GM12878 (cell line): ENCODE measurements at regions of chr17 and their contacts with region 1.

Region 1: DNA sequence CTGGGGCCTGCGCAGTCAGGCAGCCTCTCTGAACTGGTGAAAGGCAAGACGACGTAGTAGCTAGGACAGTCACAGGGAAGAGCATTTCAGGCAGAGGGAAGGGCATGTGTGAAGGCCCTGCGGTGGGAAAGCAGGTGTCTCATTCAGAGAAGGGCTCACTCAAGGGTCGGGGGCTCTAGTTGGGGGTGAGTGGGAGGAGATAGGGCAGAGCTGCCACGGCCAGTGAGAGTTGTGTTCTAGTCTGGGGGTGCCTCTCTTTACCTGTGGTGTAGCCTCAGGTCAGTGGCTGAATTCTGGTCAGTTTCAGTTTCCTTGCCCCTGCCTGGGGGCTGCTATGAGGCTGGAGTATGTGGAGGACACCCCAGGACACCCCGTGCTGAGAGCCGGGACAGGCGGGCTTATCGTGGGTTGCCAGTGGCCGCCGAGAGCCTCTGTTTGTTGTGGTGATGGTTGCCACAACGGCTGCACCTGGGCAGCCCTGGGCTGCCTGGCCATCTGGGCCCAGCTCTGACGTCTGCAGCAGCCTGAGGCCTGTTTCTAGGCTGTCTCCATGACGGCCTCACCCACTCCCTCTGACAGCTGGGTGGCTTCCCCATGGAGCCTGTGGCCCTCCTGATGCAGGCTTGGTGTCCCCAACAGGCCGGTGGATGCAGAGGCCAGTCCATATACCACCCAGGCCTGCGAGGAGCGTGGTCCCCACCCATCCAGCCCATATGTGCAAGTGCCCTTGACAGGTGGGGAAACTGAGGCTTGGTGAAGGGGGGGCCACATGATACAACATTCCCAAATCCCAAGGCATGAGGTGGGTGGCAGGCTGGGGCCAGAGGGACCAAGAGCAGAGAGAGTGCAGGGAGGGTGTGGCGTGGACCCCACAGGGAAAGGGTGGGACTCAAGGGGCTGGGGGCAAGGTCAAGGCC is 10.8 kb downstream of the MAP2K3 start:
- DNase-seq: no peak
- ATAC-seq: peak; percentile 28
- H3K4me3 ChIP-seq: no peak overlapping the region
- H3K27ac ChIP-seq: no peak overlapping the region
- H3K4me1 ChIP-seq: no peaks in the 10 kb centered on the region
- H3K27me3 ChIP-seq: no peaks in the 10 kb centered on the region
- CTCF ChIP-seq: no peak
- EP300 ChIP-seq: no peak
- POLR2A ChIP-seq: no peak
- RAD21 ChIP-seq: no peak

Region 2: GRCh38 chr17:22171631-22172030 is 876.3 kb after region 1 on chr17:
- CTCF ChIA-PET with region 1: no interaction called
- POLR2A ChIA-PET with region 1: no interaction called
- RAD21 ChIA-PET with region 1: no interaction called
- SMC1A ChIA-PET with region 1: no interaction called
- in situ Hi-C with region 1: loop called (anchors 10 kb)
- intact Hi-C with region 1: no loop called
- DNase-seq: no peak
- ATAC-seq: no peak
- H3K4me3 ChIP-seq: no peak overlapping the region
- H3K27ac ChIP-seq: no peak overlapping the region
- H3K4me1 ChIP-seq: no peaks in the 10 kb centered on the region
- H3K27me3 ChIP-seq: no peaks in the 10 kb centered on the region
- CTCF ChIP-seq: no peak
- EP300 ChIP-seq: no peak
- POLR2A ChIP-seq: no peak
- RAD21 ChIP-seq: no peak

Region 3: DNA sequence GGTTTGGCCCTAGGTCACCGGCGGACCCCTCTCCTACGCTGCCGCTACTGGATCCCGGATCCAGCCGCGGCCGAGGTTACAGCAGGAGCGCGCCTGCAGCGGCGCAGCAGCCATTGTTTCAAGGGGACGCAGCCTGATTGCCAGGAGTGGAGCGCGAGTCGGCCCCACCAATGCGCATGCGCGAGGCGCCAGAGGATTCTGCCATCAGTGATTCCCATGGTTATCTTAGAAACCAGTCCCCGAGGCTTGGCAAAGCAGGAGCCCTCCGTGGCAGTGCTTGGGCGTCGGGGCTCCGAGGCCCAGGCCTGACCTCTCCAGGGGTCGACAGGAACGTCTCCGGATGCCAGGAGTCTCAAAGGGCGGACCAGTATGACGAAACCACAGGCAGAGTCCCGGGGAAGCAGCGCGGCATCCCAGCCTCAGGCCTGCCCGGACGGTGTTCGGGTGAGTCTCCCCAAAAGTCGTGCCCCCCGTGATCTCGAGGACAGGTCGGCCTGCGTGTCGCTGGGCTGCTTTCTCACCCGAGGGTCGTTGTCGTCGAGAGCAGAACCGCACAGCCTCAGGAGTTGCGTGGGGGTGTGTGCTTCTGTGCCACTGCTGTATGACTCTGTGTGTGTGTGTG is 1005.5 kb after region 1 on chr17:
- CTCF ChIA-PET with region 1: no interaction called
- POLR2A ChIA-PET with region 1: no interaction called
- RAD21 ChIA-PET with region 1: no interaction called
- SMC1A ChIA-PET with region 1: no interaction called
- in situ Hi-C with region 1: loop called (anchors 10 kb)
- intact Hi-C with region 1: no loop called
- DNase-seq: no peak
- ATAC-seq: no peak
- H3K4me3 ChIP-seq: no peak overlapping the region
- H3K27ac ChIP-seq: no peak overlapping the region
- H3K4me1 ChIP-seq: no peaks in the 10 kb centered on the region
- H3K27me3 ChIP-seq: no peaks in the 10 kb centered on the region
- CTCF ChIP-seq: no peak
- EP300 ChIP-seq: no peak
- POLR2A ChIP-seq: no peak
- RAD21 ChIP-seq: no peak